CD4-positive, alpha-beta memory T cell (primary cell): ENCODE measurements at regions of chr7 and their contacts with region 1.

Region 1: DNA sequence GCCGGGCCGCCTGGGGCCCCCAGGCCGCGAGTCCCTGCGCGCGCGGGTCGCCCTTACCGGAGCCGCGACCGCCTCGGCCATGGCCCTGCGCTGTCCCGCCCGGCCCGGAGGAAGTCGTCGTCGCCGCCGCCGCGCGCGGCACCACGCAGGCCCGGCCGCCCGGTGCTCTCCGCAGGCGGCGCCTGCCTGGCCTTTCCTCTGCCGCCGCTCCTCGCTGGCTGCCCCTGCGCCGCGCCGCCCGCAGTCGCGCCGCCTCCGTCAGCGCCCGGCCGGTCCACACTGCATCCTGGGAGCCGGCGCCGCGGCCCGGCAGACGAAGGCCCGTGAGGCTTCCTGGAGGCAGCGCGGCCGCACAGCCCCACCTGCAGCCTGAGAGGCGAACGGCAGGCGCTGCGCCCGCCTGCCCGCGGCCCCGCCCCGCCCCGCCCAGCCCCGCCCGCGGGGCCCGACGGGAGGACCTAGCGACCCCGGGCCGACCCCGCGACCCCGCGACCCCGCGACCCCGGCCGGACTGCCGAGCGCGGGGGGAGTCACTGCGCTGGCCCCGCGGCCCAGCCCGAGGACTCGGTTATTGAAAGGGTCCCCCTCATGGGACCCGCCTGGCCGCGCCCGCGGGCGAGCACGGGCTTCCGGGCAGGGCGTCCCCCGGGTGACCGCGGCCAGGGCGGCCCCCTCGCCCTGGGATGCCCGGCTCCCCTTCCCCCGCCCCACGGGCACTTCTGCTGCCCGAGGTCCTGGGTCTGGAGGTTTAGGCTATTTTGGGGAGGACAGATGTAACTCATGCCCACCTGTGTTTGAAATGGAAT is at the start of gene ZNF746:
- DNase-seq: peak; percentile 77 to 81 (median 78)
- H3K4me3 ChIP-seq: peak within 1 kb of the TSS; percentile 62 to 84
- H3K4me3 Mint-ChIP-seq: peak within 1 kb of the TSS; percentile 92 to 99 (median 95)
- H3K27ac ChIP-seq: peak within 1 kb of the TSS; percentile 63
- H3K27ac Mint-ChIP-seq: peak within 1 kb of the TSS; percentile 91 to 98 (median 96)
- H3K4me1 ChIP-seq: peaks cover 31% of the 10 kb centered on the region
- H3K4me1 Mint-ChIP-seq: peaks cover 21 to 44% (median 27%) of the 10 kb centered on the region in 4 donors
- H3K27me3 ChIP-seq: no peaks in the 10 kb centered on the region
- H3K27me3 Mint-ChIP-seq: no peaks in the 10 kb centered on the region
- total RNA-seq, gene ZNF746: 25.2 to 25.6 TPM

Region 2: DNA sequence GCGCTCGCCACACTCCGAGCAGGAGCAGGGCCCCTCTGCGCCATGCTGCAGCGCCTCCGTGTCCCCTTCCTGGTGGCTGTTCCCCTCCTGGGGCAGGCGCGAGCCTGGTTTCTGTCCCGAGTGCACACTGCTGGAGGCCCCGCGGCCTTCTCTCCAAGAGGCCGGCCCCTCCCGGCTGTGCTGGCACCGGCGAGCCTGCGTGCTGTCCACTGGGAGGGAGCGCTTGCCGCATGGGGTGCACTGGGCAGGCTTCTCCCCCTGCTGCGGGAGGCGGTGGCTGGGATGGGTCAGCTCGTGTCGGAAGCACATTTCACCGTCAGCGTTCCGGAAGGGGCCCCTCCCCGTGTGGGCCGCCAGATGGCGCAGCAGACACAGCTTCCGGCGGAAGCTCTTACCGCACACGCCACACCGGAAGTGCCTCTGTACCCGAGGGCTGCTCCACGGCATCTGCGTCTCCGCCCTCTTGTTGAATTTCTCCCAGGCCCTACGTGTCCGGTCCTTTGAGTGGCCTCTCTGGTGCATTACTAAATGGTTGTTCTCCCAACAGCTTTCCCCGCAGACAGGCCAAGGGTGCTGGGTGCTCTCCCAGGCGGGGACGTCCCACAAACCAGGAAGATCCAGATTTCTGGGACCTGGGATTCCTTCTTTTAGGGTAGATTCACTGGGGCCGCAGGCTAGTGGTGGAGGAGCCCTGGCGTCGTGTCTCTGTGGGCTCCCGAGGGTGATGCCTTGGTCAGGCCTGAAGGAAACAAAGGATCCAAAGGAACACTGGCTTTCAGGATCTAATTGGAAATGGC is 425.8 kb before region 1 on chr7:
- CTCF ChIA-PET with region 1: no interaction called
- POLR2A ChIA-PET with region 1: no interaction called
- intact Hi-C with region 1: loop called (anchors 10 kb)
- DNase-seq: peak in 4 of 5 donors; percentile 46 to 60 (median 55)
- H3K4me3 ChIP-seq: no peak overlapping the region
- H3K4me3 Mint-ChIP-seq: peak overlapping the region in 4 of 8 donors; percentile 8 to 55 (median 46)
- H3K27ac ChIP-seq: peak overlapping the region; percentile 31
- H3K27ac Mint-ChIP-seq: peak overlapping the region; percentile 36 to 83 (median 72)
- H3K4me1 ChIP-seq: peaks cover 4% of the 10 kb centered on the region
- H3K4me1 Mint-ChIP-seq: peaks cover 4 to 19% (median 6%) of the 10 kb centered on the region in 4 donors
- H3K27me3 ChIP-seq: no peaks in the 10 kb centered on the region
- H3K27me3 Mint-ChIP-seq: no peaks in the 10 kb centered on the region

Region 3: DNA sequence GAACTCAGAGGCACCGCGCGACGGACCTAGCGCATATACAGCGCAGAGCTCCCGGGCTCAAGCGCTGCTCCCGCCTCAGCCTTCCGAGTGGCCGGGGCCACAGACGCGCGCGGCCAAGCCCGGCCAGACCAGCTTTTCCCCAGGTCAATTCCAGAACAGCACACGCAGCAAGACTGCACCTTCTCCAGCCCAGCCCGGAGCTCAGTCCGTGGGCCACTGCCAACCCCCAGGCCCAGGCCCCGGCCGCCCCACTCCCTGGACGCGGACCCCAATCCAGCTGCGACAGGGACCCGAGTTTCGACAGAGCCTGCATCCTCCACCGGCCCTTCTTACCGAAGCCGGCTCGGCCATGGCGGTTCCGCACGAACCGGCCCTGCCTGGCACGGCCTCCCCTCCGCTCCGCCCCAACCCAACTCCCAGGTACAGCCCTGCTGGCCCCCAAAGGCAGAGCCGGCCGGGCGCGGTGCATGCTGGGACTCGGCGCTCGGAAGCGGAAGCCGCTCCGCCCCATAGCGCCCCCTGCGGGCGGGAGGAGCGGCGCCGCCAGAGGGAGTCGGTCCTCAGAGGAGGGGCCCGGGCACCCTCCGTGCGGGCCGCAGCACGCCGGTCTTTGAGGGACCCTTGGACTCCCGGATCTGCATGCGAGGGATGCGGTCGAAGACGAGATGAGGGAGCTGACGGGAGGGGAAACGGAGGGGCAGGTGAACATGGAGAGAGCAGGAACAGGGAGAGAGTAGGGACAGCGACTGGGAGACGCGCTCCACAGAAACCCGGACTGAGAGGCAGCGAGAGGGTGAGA is 371.6 kb before region 1 on chr7 and contains the start of gene ZNF425:
- CTCF ChIA-PET with region 1: no interaction called
- POLR2A ChIA-PET with region 1: no interaction called
- intact Hi-C with region 1: loop called (anchors 5 kb)
- DNase-seq: peak; percentile 89 to 94 (median 91)
- H3K4me3 ChIP-seq: peak within 1 kb of the TSS; percentile 83 to 96
- H3K4me3 Mint-ChIP-seq: peak within 1 kb of the TSS; percentile 91 to 100 (median 100)
- H3K27ac ChIP-seq: peak within 1 kb of the TSS; percentile 88
- H3K27ac Mint-ChIP-seq: peak within 1 kb of the TSS; percentile 91 to 99 (median 98)
- H3K4me1 ChIP-seq: peaks cover 19% of the 10 kb centered on the region
- H3K4me1 Mint-ChIP-seq: peaks cover 15 to 35% (median 25%) of the 10 kb centered on the region in 4 donors
- H3K27me3 ChIP-seq: no peaks in the 10 kb centered on the region
- H3K27me3 Mint-ChIP-seq: no peaks in the 10 kb centered on the region
- total RNA-seq, gene ZNF425: 3.2 to 4.0 TPM

Region 4: GRCh38 chr7:149284850-149285626 is 212.6 kb before region 1 on chr7:
- CTCF ChIA-PET with region 1: no interaction called
- POLR2A ChIA-PET with region 1: no interaction called
- intact Hi-C with region 1: loop called (anchors 1 kb)
- DNase-seq: peak; percentile 96 to 98 (median 98)
- H3K4me3 ChIP-seq: peak overlapping the region; percentile 49 to 72
- H3K4me3 Mint-ChIP-seq: peak overlapping the region; percentile 80 to 96 (median 90)
- H3K27ac ChIP-seq: peak overlapping the region; percentile 57
- H3K27ac Mint-ChIP-seq: peak overlapping the region; percentile 87 to 93 (median 91)
- H3K4me1 ChIP-seq: peaks cover 38% of the 10 kb centered on the region
- H3K4me1 Mint-ChIP-seq: peaks cover 26 to 53% (median 40%) of the 10 kb centered on the region in 4 donors
- H3K27me3 ChIP-seq: no peaks in the 10 kb centered on the region
- H3K27me3 Mint-ChIP-seq: no peaks in the 10 kb centered on the region

Region 5: GRCh38 chr7:149310113-149310836 is 187.4 kb before region 1 on chr7:
- CTCF ChIA-PET with region 1: interaction called, 4 read pairs
- POLR2A ChIA-PET with region 1: no interaction called
- intact Hi-C with region 1: loop called (anchors 1 kb)
- DNase-seq: peak in 4 of 5 donors; percentile 20 to 38 (median 23)
- H3K4me3 ChIP-seq: no peak overlapping the region
- H3K4me3 Mint-ChIP-seq: no peak overlapping the region
- H3K27ac ChIP-seq: no peak overlapping the region
- H3K27ac Mint-ChIP-seq: peak overlapping the region in 4 of 7 donors; percentile 0 to 70 (median 18)
- H3K4me1 ChIP-seq: no peaks in the 10 kb centered on the region
- H3K4me1 Mint-ChIP-seq: peaks cover 0 to 5% (median 3%) of the 10 kb centered on the region in 4 donors
- H3K27me3 ChIP-seq: no peaks in the 10 kb centered on the region
- H3K27me3 Mint-ChIP-seq: peaks cover 0 to 2% of the 10 kb centered on the region in 2 donors

Region 6: GRCh38 chr7:149460493-149461277 is 37.0 kb before region 1 on chr7 and contains the start of gene ZNF777:
- CTCF ChIA-PET with region 1: interaction called, 9 read pairs
- POLR2A ChIA-PET with region 1: interaction called, 7 read pairs
- intact Hi-C with region 1: loop called (anchors 5 kb)
- DNase-seq: peak; percentile 80 to 88 (median 83)
- H3K4me3 ChIP-seq: peak within 1 kb of the TSS; percentile 73 to 74
- H3K4me3 Mint-ChIP-seq: peak within 1 kb of the TSS; percentile 86 to 91 (median 88)
- H3K27ac ChIP-seq: peak within 1 kb of the TSS; percentile 62
- H3K27ac Mint-ChIP-seq: peak within 1 kb of the TSS; percentile 48 to 90 (median 87)
- H3K4me1 ChIP-seq: peaks cover 24% of the 10 kb centered on the region
- H3K4me1 Mint-ChIP-seq: peaks cover 16 to 33% (median 28%) of the 10 kb centered on the region in 4 donors
- H3K27me3 ChIP-seq: peaks cover 6% of the 10 kb centered on the region
- H3K27me3 Mint-ChIP-seq: peaks cover 0 to 3% of the 10 kb centered on the region in 2 donors
- total RNA-seq, gene ZNF777: 15.9 to 16.8 TPM

Region 7: DNA sequence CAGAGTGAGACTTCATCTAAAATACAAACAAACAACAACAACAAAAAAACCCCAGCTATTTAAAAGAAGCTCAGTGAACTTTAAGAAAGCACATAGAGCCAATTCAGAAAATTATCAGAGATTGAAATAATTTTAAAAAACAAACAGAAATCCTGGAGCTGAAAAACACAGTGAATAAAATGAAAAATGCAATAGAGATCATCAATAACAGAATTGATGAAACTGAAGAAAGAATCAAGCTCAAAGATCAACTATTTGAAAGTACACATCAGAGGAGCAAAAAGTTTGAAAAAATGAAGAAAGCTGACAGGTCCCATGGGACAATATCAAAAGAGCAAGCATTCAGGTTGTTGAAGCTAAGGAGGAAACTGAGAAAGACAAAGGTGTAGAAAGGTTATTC is 12.1 kb after region 1 on chr7:
- CTCF ChIA-PET with region 1: no interaction called
- POLR2A ChIA-PET with region 1: no interaction called
- intact Hi-C with region 1: no loop called
- DNase-seq: no peak
- H3K4me3 ChIP-seq: no peak overlapping the region
- H3K4me3 Mint-ChIP-seq: no peak overlapping the region
- H3K27ac ChIP-seq: no peak overlapping the region
- H3K27ac Mint-ChIP-seq: no peak overlapping the region
- H3K4me1 ChIP-seq: no peaks in the 10 kb centered on the region
- H3K4me1 Mint-ChIP-seq: no peaks in the 10 kb centered on the region
- H3K27me3 ChIP-seq: no peaks in the 10 kb centered on the region
- H3K27me3 Mint-ChIP-seq: peaks cover 2 to 5% of the 10 kb centered on the region in 2 donors